Activated T-helper 2 cell treated with anti-CD3 and anti-CD28 coated beads, Interferon-gamma antibody, Interleukin-2, Interleukin-4, amounts not matched to agents 10 μg/mL and 5 μg/mL and 100 μg/mL, durations not matched to agents 14 hours and 24 hours and 36 hours (primary cell): ENCODE measurements at regions of chr5 and their contacts with region 1.

Region 1: DNA sequence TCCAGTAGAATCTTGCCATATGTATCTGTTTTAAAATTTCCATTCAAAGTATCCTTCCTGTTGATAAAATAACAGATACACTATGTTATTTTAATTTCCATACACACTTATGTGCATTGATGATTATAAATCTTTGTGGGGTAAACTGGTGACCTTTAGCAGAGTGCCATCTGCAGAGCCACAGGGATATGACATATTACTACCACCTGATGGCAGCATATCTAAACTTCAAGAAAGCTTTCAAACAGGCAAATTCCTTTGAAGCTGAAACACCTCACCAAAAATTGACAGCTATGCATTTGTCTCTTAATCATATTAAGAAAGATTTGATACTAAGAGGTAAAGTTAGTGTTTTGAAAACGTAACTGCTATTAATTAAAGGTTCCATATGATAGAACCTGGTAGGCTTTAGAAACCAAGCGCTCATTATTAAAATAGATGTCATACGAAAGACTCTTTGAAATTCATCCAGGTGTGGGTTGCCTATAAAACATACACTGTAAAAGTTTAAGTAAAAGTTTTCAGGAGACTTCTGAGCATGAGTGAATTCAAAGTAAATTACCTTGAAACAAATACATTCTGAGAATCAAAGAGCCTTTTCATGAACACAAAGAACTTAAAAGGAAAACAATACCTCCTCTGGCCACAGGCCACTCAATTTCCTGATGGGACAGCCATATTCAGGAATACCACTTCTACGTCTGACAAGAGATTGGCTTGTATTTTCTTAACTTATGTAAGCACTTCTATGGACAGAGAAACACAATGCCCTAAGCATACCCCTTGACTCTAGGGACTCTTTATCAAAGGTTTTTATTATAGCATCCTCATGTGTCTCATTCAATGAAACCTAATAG is 93.3 kb downstream of the KIAA0825 start:
- DNase-seq: no peak
- H3K4me3 Mint-ChIP-seq: no peak overlapping the region
- H3K27ac Mint-ChIP-seq: no peak overlapping the region
- H3K4me1 Mint-ChIP-seq: no peaks in the 10 kb centered on the region
- H3K27me3 Mint-ChIP-seq: no peaks in the 10 kb centered on the region

Region 2: GRCh38 chr5:94445726-94446125 is 79.3 kb before region 1 on chr5:
- intact Hi-C with region 1: no loop called
- DNase-seq: no peak
- H3K4me3 Mint-ChIP-seq: no peak overlapping the region
- H3K27ac Mint-ChIP-seq: no peak overlapping the region
- H3K4me1 Mint-ChIP-seq: no peaks in the 10 kb centered on the region
- H3K27me3 Mint-ChIP-seq: no peaks in the 10 kb centered on the region

Region 3: DNA sequence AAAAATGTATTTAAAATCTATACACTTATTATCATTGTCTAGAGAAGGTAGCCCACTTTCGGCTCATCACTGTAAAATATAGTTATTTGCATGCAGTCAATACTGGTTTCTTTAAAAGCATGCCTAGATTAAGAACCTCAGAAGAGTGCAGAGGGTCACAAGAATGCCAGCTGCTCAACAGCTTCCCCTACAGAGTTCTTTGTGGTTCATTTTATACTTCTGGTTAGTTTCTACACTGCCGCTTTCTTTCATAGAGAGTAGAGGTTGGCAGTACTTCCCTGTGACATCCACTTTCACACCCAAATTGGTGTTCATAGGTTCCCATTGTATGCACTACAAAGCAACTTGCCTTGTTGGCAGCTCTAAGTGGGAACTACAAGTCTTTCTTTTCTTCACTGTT is 44.0 kb before region 1 on chr5:
- intact Hi-C with region 1: no loop called
- DNase-seq: no peak
- H3K4me3 Mint-ChIP-seq: no peak overlapping the region
- H3K27ac Mint-ChIP-seq: no peak overlapping the region
- H3K4me1 Mint-ChIP-seq: no peaks in the 10 kb centered on the region
- H3K27me3 Mint-ChIP-seq: no peaks in the 10 kb centered on the region

Region 4: DNA sequence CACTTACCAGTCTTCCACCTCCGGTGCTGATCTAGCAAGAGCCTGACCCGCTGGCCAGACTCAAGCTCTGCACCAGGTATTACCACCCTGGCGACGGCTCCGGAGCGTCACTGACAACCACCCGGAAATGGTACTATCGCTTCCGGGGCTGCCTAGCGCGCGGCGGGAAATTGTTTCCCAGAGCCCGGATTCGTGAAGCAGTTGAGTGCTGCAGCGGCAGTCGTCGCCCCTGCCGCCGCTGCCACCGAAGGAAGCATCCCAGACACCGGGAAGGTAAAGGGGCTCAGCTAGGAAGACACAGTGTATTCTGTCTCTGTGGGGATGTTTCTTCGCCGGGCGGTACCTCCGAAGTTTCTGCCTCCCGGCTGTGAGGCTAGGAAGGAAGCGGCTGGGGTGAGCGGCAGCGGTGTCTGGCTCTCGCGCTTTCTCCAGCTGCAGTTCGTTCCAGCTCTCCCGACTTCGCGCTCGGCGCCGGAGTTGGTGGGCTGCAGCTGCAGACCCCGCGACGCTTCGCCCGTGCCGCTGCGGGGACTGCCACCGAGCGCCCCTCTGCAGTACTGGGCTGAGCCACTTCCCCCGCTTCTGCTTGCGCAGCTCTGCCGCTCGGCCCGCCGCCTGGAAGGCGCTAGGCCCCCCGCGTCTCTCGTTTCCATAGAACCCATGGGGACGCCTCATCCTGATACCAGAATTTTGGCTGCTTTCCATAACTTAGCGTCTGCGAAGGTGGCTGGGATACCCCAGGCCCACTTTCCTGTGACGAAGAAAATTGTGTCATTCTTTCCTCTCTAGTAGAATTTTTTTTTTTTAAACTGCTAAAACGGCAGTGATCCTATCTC is 93.6 kb after region 1 on chr5 and contains the starts of genes KIAA0825 and SLF1:
- intact Hi-C with region 1: loop called (anchors 10 kb)
- DNase-seq: peak; percentile 83
- H3K4me3 Mint-ChIP-seq: peak within 1 kb of the TSS; percentile 97
- H3K27ac Mint-ChIP-seq: peak within 1 kb of the TSS; percentile 96
- H3K4me1 Mint-ChIP-seq: peaks cover 37% of the 10 kb centered on the region
- H3K27me3 Mint-ChIP-seq: no peaks in the 10 kb centered on the region
- total RNA-seq, gene KIAA0825: 0.32 and 0.62 TPM in 2 replicates
- total RNA-seq, gene SLF1: 12.7 and 13.7 TPM in 2 replicates

Region 5: GRCh38 chr5:94693043-94693822 is 168.2 kb after region 1 on chr5:
- intact Hi-C with region 1: loop called (anchors 2 kb)
- DNase-seq: no peak
- H3K4me3 Mint-ChIP-seq: no peak overlapping the region
- H3K27ac Mint-ChIP-seq: no peak overlapping the region
- H3K4me1 Mint-ChIP-seq: no peaks in the 10 kb centered on the region
- H3K27me3 Mint-ChIP-seq: no peaks in the 10 kb centered on the region

Region 6: DNA sequence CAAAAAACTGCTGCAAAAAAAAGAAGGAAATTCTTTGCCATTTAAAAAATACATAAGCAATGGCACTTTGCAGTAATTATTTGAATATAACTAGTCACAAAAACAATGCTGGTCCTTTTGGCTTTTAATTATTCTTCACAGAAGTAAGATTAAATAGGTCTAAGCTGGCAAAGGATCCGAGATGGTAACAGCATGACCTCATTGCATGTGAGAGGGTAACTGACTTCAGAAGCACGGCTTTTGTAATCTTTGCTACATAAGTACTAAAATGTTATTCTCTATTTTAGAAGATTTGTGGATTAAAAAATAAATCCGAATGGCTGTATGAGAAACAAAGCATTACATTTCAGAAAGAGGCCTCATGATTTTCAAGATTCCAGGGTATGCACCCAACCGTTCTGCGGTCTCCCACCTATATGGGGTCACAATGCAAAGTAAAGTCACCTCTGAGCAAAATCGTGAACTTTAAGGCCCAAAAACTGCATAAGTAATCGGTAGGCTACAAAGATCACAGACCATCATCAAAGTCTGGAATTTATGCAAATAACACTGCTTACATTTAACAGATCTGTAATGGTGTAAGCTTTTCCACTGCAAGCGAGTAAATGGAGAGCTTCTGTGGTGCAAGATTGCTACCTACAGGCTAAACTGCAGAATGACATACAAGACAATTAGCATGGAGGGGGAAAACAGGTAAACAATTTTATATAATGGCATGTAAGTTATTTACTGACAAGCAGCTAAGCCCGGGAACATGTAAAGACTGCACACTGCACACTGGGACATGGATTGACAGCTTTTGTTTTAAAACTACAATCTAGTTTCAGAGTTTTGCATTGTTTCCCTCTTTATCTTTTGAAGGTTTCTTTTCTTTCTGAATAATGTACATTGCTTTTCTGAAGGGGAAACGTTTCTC is 325.0 kb after region 1 on chr5:
- intact Hi-C with region 1: loop called (anchors 2 kb)
- DNase-seq: no peak
- H3K4me3 Mint-ChIP-seq: no peak overlapping the region
- H3K27ac Mint-ChIP-seq: no peak overlapping the region
- H3K4me1 Mint-ChIP-seq: peaks cover 2% of the 10 kb centered on the region
- H3K27me3 Mint-ChIP-seq: peaks cover 13% of the 10 kb centered on the region